ENCODE measurements at regions of chr1 and their contacts with region 1.

Region 1: DNA sequence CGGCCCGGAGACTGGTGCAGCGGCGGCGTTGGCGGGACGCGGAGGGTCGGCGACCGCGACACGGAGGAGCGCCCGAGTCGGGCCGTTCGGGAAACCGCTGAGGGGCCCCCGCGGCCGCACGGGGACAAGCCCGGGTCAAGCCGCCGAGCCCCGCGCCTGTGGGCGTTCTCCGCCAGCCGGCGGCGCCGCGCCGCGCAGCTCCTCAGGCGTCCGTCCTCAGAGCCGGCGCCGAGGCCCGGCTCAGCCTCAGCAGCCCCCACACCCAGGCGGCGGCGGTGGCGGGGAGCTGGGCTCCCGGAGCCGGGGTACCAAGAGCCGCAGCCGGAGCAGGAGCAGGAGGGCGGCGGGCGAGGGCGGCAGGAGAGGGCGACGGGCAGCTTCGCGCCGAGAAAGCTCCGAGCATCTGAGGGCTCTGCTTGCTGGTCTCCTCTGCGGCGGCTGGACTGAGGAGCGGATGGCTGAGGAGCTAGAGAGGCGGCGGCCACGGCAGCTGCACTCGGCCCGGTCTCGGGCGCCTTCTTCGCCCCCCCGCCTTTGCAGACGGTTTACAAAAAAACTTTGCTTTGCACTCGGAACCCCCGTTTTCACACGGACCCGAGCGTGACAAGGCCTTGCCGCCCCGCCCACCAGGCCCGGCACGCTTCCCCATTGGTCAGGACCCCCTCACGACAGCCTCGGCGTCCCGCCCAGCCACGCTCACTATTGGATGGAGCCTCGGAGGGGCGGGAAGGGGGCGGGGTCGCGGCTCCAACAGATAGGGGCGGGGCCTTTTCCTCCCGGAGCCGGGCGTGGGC is at the start of gene SLC30A1:
- DNase-seq: peak; percentile 99
- H3K4me3 ChIP-seq: peak within 1 kb of the TSS; percentile 83
- H3K27ac ChIP-seq: peak within 1 kb of the TSS; percentile 81
- H3K4me1 ChIP-seq: peaks cover 40% of the 10 kb centered on the region
- CTCF ChIP-seq: no peak
- total RNA-seq, gene SLC30A1: 6.1 and 6.5 TPM in 2 replicates

Region 2: DNA sequence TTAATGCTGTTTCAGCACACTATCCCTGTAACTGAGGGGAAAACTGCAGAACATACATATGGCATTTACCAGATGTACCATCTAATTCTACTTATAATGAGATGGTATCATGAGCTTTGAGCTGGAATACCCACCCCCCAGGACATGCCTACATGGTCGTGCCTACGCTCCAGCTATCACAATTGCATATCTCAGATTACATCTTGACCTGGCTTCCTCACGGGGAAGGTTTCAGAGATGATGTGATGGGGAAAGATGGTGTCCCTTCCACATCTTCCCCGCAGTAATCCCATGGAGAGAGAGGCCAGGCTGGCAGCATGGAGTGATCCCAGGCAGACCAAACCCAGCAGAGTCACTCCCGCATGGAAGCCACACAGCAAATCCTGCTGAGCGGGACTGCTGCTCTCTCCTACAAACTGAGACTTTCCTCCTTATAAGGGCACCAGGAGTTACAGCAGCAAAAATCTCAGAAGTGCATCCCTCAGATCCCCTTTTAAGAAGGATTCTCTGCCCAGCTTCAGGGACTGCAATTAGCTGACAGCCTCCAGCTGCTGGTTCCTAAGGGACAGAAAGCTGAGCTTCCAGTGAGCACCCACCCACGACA is 512.0 kb before region 1 on chr1:
- CTCF ChIA-PET with region 1: no interaction called
- POLR2A ChIA-PET with region 1: no interaction called
- intact Hi-C with region 1: no loop called
- DNase-seq: no peak
- H3K4me3 ChIP-seq: no peak overlapping the region
- H3K27ac ChIP-seq: no peak overlapping the region
- H3K4me1 ChIP-seq: no peaks in the 10 kb centered on the region
- CTCF ChIP-seq: no peak

Region 3: DNA sequence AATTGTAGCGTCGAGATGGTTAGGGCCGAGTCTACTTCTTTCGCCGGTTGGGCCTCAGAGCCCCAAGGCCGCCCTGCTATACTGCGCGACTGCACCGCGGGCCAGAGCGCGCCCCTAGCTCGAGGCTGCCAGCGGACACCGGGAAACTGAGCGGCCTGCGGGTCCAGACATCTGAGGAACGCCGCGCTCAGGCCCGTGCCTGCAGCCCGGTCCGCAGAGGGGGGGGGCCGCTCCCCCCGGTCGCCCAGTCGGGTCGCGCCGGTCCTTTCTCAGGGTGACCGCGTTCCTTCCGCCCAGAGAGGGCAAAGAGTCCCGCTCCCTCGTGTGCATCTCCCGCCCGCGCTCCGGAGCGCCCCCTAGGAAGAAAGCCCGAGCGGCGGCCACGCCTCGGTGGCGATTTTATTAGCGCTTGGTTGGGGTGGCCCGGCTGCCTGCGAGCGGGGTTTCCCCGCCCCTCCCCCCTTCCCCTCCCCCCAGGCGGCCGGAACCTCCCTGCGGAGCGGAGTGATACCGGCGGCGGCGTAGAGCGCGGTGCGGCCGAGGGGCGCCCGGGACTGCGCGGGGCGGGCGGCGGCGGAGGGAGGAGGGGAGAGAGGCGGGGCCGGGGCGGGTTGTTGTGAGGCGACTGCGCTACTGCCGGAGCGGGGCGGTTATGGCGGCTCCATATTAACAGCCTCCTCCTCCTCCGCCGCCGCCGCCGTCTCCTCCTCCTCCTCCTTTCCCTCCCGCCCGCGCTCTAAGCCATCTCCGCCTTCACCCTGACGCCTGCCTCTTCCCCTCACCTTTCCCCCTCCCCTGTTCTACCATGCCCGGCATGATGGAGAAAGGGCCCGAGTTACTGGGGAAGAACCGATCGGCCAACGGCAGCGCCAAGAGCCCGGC is 319.8 kb before region 1 on chr1 and contains the start of gene RCOR3:
- CTCF ChIA-PET with region 1: no interaction called
- POLR2A ChIA-PET with region 1: no interaction called
- intact Hi-C with region 1: loop called (anchors 2 kb)
- DNase-seq: peak; percentile 92
- H3K4me3 ChIP-seq: peak within 1 kb of the TSS; percentile 87
- H3K27ac ChIP-seq: peak within 1 kb of the TSS; percentile 96
- H3K4me1 ChIP-seq: peaks cover 16% of the 10 kb centered on the region
- CTCF ChIP-seq: peak; percentile 67
- total RNA-seq, gene RCOR3: 32.3 and 34.8 TPM in 2 replicates

Region 4: GRCh38 chr1:211557894-211558625 is 20.8 kb before region 1 on chr1:
- CTCF ChIA-PET with region 1: no interaction called
- POLR2A ChIA-PET with region 1: no interaction called
- intact Hi-C with region 1: no loop called
- DNase-seq: no peak
- H3K4me3 ChIP-seq: no peak overlapping the region
- H3K27ac ChIP-seq: no peak overlapping the region
- H3K4me1 ChIP-seq: no peaks in the 10 kb centered on the region
- CTCF ChIP-seq: no peak

Region 5: DNA sequence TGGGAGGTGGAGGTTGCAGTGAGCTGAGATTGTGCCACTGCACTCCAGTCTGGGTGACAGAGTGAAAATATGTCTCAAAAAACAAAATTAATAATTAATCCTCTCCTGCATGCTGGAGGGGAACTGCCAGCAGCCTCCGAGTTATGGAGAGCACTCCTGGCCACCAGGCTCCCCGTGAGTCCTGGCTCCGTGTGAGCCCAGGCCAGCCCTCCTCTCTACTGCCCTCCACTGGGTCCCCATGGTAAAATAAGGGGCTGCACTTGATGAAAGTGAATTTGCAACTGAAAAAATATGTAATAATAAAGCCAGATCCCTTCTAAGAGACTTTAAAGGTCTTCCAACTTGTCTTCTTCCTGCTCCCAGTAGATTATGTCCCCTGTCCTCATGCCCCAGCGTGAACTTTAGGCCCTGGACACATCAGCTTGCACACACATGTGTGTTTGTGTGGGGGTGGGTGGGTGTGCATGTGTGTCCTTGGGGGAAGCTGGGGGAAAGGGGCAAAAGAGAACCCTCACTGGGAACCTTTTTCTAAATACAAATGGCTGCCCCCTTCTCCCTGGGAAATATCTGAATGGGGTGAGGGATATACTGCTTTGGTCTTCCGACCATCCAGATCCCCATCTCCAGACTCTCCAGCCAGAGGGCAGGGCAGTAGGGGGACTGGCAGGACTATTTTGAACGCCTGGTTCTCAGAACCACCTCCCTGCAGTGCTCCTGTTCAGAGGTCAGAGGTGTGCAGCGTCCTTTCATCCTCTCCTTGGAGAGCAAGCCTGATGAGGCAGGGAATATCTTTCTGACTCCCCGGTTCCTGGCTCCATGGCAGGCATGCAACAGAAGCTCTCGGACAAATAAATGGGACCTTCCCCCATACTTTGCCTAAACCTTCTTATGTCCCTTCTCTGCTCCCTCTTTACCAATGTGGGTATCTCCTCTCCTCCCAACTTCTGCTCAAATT is 70.4 kb after region 1 on chr1:
- CTCF ChIA-PET with region 1: no interaction called
- POLR2A ChIA-PET with region 1: interaction called, 4 read pairs
- intact Hi-C with region 1: loop called (anchors 1 kb)
- DNase-seq: peak; percentile 60
- H3K4me3 ChIP-seq: no peak overlapping the region
- H3K27ac ChIP-seq: no peak overlapping the region
- H3K4me1 ChIP-seq: no peaks in the 10 kb centered on the region
- CTCF ChIP-seq: peak; percentile 77

Region 6: DNA sequence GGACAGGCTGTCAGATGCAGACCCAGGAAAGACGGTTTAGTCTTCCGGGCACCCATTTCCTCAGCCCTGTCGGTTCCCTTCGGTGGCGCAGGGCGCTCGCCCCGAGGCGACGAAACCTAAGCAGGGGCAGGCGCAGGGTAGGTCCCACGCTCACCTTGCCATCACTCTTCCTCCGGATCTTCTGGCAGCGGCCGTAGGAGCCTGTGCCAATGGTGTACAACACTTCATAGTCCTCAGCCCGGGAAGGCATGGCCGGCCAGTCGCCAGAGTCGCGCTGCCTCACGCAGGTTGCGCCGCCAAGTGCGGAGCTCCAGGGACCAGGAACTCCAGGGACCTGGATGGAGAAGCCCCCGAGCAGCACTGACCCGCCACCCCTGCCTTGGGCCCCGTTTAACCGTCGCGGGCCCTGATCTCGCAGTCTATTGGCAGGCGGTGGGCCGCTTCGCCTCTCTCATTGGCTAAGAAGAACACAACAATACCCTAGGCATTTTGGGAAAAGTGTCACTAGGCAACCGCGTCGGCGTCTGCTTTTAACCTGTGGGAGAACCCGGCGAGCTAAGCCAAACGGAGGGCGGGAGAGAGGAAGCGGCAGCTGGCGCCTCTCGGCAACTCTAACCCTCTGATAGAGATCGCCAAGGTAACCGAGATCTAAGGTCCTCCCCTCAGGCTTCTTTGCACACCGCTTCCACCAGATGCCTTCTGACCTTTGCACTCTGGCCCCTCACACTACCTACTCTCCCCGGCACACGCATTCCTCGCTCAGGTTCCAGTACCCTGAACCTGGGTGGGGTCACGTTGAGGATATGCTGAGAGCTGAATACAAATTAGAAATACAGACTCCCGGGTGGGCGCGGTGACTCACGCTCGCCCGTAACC is 96.6 kb after region 1 on chr1 and contains the start of gene NEK2:
- CTCF ChIA-PET with region 1: no interaction called
- POLR2A ChIA-PET with region 1: interaction called, 4 read pairs
- intact Hi-C with region 1: loop called (anchors 1 kb)
- DNase-seq: peak; percentile 96
- H3K4me3 ChIP-seq: peak within 1 kb of the TSS; percentile 86
- H3K27ac ChIP-seq: peak within 1 kb of the TSS; percentile 79
- H3K4me1 ChIP-seq: peaks cover 67% of the 10 kb centered on the region
- CTCF ChIP-seq: no peak
- total RNA-seq, gene NEK2: 55.9 and 72.4 TPM in 2 replicates

Region 7: DNA sequence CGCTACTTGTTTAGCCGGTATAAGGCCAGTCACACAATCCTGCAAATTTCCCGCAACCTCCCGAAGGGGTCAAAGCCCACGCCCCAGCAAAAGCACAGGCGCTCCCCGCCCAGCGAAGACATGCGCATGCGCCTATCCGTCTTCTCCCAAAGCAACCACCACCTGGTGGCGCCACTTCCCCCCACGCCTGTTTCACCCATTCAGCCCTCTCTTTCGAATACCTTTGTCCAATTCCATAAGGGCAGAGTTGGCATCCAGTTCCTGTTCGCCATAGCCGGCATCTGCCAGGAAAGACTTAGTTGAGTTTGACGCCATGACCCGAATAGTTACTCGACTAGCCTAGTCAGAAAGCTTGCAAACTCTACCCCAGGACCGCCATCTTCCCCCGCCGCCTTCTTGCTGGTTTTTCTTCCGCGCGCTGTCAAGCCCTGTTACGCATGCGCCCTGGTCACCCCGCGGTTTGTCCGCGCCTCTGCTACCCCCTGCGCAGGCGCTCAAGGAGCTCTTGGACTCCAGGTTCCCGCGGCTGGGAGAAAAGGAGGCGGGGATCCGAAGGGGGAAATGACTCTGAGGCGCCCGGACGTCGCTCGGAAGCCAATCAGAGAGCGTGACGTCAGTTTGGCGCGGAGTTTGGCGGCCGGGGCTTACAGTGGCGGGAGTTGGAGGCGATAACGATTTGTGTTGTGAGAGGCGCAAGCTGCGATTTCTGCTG is 456.4 kb after region 1 on chr1 and contains the starts of genes DTL and INTS7:
- CTCF ChIA-PET with region 1: no interaction called
- POLR2A ChIA-PET with region 1: no interaction called
- intact Hi-C with region 1: loop called (anchors 1 kb)
- DNase-seq: peak; percentile 100
- H3K4me3 ChIP-seq: peak within 1 kb of the TSS; percentile 82
- H3K27ac ChIP-seq: peak within 1 kb of the TSS; percentile 80
- H3K4me1 ChIP-seq: peaks cover 63% of the 10 kb centered on the region
- CTCF ChIP-seq: peak; percentile 90
- total RNA-seq, gene DTL: 64.4 and 71.5 TPM in 2 replicates
- total RNA-seq, gene INTS7: 16.7 and 17.8 TPM in 2 replicates

Measured in OCI-LY7 (cell line).